Activated CD4-positive, alpha-beta T cell treated with anti-CD3 and anti-CD28 coated beads for 36 hours (primary cell): ENCODE measurements at regions of chr1 and their contacts with region 1.

Region 1: DNA sequence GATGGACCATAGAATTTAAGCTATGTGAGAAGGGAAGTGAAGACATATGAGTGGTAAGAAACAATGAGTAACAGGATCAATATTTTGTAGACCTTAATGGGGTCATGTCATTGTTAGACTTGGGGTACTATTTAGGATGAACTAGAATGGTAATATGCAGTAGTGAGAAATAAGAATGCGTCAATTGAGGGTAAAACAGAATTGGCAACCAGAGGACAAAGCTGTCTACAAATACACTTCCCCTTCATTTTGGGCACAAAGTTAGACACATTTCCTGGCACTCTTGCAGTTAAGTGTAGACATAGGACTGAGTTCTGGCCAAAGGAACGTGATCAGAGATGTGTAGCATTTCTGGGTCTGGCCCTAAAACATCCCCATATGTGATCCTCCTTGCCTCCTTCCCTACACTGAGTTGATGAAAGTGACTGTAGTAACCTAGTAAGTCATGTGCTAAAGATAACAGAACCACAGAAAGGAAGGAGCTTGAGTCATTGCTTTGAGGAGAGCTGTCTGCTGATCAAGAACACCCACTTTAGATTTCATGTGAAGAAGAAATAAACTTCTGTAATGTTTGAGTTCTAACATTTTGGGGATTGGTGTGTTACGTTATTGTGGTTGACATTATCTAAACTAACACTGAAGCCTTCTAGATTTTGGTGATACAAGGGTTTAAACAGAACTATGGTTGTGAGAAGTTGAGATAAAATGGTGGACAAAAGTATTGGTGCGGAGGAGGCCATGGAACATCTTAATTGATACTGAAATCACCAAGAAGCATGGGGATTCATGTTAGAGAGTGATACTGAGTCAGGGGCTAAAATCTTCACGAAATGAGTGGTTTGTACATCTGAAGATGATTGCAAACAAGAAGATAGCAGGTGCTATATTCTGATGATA is 41.7 kb downstream of the CD55 start:
- DNase-seq: peak; percentile 37
- ATAC-seq: peak; percentile 89
- H3K4me3 Mint-ChIP-seq: no peak overlapping the region
- H3K27ac Mint-ChIP-seq: no peak overlapping the region
- H3K4me1 Mint-ChIP-seq: peaks cover 2% of the 10 kb centered on the region
- H3K27me3 Mint-ChIP-seq: no peaks in the 10 kb centered on the region

Region 2: DNA sequence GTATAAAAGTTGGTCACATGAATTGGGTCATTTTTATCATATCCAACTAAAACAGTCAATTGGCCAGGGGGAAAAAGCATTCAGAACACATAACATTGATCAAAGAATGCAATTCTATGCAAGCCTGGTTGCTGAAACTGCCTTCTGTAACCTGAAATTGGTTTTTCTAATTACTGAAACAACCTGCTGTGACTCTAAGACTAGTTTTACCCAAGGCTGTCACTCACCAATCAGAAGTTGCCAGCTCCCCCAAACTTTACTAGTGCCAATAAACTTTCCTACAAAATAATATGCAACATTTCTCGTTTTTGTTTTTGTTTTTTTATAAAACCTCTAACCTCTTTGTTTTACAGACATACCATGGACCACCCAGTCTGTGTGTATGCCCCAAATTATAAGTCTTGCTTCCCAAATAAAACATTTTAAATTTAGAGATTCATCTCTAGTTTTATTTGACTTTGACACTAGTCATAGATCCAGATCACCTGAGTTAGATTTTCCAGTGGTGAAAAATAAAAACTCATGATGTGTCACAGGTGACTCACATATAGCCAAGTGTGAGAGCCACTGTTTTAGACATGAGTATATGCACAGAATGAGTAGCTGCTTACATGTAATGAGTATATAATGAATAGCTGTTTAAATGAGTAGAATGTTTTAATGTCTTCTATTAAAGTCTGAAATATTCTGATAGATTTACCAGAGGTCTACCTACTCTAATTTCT is 26.7 kb after region 1 on chr1:
- CTCF ChIA-PET with region 1: no interaction called
- POLR2A ChIA-PET with region 1: interaction called, 3 read pairs
- intact Hi-C with region 1: loop called (anchors 1 kb)
- DNase-seq: peak; percentile 29
- ATAC-seq: peak; percentile 98
- H3K4me3 Mint-ChIP-seq: no peak overlapping the region
- H3K27ac Mint-ChIP-seq: peak overlapping the region; percentile 83
- H3K4me1 Mint-ChIP-seq: peaks cover 19% of the 10 kb centered on the region
- H3K27me3 Mint-ChIP-seq: no peaks in the 10 kb centered on the region

Region 3: DNA sequence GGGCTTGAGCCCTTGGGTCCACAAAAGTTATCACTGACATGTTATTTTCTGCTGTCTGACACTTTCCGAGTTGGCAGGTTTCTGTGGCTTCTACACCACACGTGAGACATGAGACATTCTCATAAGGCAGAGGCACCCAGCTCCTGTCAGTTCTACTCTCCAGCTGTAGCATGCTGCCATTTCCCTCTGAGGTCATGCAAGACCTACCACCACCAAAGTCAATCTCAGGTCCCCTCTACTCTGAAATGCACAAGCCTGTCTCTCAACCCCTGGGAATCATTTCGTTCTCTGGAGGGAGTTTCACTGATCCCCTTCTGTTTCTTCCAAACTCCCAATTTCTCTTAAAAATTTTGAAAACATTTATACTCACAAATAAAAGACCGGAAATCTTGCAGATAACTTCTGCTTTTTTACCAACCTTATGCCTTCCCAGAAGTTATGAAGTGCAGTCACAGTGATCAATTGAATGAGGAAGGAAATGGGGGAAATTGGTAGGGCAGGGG is 51.4 kb after region 1 on chr1:
- CTCF ChIA-PET with region 1: no interaction called
- POLR2A ChIA-PET with region 1: interaction called, 4 read pairs
- intact Hi-C with region 1: loop called (anchors 2 kb)
- DNase-seq: peak; percentile 75
- ATAC-seq: peak; percentile 74
- H3K4me3 Mint-ChIP-seq: no peak overlapping the region
- H3K27ac Mint-ChIP-seq: peak overlapping the region; percentile 10
- H3K4me1 Mint-ChIP-seq: peaks cover 37% of the 10 kb centered on the region
- H3K27me3 Mint-ChIP-seq: peaks cover 4% of the 10 kb centered on the region

Region 4: DNA sequence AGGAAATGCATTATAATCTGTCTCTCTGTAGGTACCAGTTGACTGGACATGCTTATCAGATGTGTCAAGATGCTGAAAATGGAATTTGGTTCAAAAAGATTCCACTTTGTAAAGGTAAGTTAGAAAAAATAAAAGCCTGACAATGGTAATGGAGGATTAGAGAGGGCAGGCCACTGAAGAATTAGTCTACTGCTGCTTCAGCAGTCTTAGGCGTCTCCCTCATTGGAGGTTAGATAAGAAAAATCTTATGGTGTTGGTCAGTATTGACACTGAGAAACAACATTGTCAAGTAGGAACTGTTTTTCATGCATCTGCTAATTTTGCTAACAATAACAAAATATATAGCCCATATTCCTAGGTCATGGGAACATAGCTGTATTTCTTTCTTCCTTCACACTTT is 111.0 kb after region 1 on chr1:
- CTCF ChIA-PET with region 1: no interaction called
- POLR2A ChIA-PET with region 1: no interaction called
- intact Hi-C with region 1: no loop called
- DNase-seq: no peak
- ATAC-seq: no peak
- H3K4me3 Mint-ChIP-seq: no peak overlapping the region
- H3K27ac Mint-ChIP-seq: no peak overlapping the region
- H3K4me1 Mint-ChIP-seq: peaks cover 13% of the 10 kb centered on the region
- H3K27me3 Mint-ChIP-seq: peaks cover 2% of the 10 kb centered on the region

Region 5: DNA sequence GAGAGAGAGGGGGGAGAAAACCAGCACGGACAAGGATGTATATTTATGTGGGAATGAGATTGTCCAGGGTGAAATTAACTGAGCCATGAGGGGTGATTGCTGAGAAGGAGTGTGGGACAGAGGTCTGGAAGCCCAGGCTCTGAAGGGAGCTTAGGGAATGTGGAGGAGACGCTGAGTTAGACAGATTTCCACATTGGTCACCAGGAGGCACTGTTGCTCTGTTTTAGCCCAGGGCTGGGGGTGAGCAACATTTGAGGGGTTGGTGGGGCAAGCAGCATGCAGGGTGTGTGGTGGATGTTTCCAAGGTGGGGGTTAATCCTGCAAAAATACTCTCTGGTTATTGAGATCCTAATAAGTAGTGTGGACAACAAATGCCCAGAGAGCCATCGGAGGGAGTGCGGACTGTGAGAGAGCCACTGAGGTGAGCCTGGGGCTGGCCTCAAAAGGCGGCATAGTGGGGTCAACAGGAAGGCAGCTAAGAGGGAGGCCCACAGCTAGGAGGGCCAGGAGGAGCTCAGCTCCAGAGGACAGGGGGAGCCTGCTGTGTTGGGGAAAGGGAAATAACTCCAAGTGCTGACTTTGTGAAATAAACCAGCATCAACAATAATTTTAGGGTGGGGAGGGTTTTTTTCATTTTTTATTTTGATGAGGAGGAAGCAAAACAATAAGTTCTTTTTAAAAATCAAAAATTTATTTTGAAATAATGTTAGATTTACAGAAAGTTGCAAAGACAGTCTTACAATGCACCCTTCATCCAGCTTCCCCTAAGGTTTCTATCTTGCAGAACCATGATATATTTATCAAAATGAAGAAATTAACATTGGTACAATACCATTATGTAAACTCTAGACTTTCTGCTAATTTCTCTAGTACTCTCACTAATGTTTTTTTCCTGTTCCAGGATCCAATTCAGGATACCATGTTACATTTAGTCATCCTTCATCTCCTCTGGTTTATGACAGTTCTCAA is 630.6 kb after region 1 on chr1:
- CTCF ChIA-PET with region 1: no interaction called
- POLR2A ChIA-PET with region 1: no interaction called
- intact Hi-C with region 1: no loop called
- DNase-seq: peak; percentile 8
- ATAC-seq: no peak
- H3K4me3 Mint-ChIP-seq: no peak overlapping the region
- H3K27ac Mint-ChIP-seq: no peak overlapping the region
- H3K4me1 Mint-ChIP-seq: no peaks in the 10 kb centered on the region
- H3K27me3 Mint-ChIP-seq: peaks cover 17% of the 10 kb centered on the region